Endothelial cell of umbilical vein (primary cell): ENCODE measurements at regions of chr13 and their contacts with region 1.

Region 1: GRCh38 chr13:89514534-89515312 is 1832.8 kb upstream of the MIR17HG start:
- DNase-seq: peak; percentile 97
- H3K4me3 ChIP-seq: no peak overlapping the region
- H3K27ac ChIP-seq: peak overlapping the region; percentile 98
- H3K4me1 ChIP-seq: peaks cover 29% of the 10 kb centered on the region
- H3K27me3 ChIP-seq: no peaks in the 10 kb centered on the region
- CTCF ChIP-seq: no peak
- POLR2A ChIP-seq: peak; percentile 42

Region 2: GRCh38 chr13:89375839-89376238 is 138.9 kb before region 1 on chr13:
- CTCF ChIA-PET with region 1: interaction called, 4 read pairs
- POLR2A ChIA-PET with region 1: no interaction called
- dilution Hi-C with region 1: no loop called
- intact Hi-C with region 1: loop called (anchors 5 kb)
- DNase-seq: peak; percentile 73
- H3K4me3 ChIP-seq: no peak overlapping the region
- H3K27ac ChIP-seq: peak overlapping the region; percentile 1
- H3K4me1 ChIP-seq: peaks cover 2% of the 10 kb centered on the region
- H3K27me3 ChIP-seq: no peaks in the 10 kb centered on the region
- CTCF ChIP-seq: no peak
- POLR2A ChIP-seq: no peak

Region 3: DNA sequence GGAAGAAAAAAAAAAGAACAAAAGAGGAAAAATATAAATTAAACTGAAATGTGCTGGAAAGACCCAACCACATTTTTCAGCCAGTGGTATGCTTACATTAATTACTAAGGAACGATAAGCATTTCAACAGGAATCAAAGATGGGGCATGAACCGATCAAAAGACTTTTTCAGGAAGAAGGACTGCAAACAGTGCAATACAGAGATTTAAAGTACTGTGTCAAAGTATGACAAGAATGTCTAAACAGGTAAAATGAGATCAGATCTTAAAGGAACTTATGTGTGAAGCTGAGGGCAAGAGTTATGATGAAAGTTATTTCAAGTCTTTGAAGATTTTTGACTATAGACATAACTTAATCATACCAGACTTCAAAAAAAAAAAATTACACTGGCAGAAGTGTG is 81.7 kb before region 1 on chr13:
- CTCF ChIA-PET with region 1: interaction called, 5 read pairs
- POLR2A ChIA-PET with region 1: no interaction called
- dilution Hi-C with region 1: no loop called
- intact Hi-C with region 1: loop called (anchors 2 kb)
- DNase-seq: peak; percentile 26
- H3K4me3 ChIP-seq: no peak overlapping the region
- H3K27ac ChIP-seq: no peak overlapping the region
- H3K4me1 ChIP-seq: no peaks in the 10 kb centered on the region
- H3K27me3 ChIP-seq: no peaks in the 10 kb centered on the region
- CTCF ChIP-seq: no peak
- POLR2A ChIP-seq: no peak

Region 4: GRCh38 chr13:89457977-89458376 is 56.7 kb before region 1 on chr13:
- CTCF ChIA-PET with region 1: interaction called, 3 read pairs
- POLR2A ChIA-PET with region 1: no interaction called
- dilution Hi-C with region 1: no loop called
- intact Hi-C with region 1: loop called (anchors 1 kb)
- DNase-seq: peak; percentile 6
- H3K4me3 ChIP-seq: no peak overlapping the region
- H3K27ac ChIP-seq: no peak overlapping the region
- H3K4me1 ChIP-seq: peaks cover 21% of the 10 kb centered on the region
- H3K27me3 ChIP-seq: no peaks in the 10 kb centered on the region
- CTCF ChIP-seq: no peak
- POLR2A ChIP-seq: no peak

Region 5: GRCh38 chr13:89550938-89551337 is 36.2 kb after region 1 on chr13:
- CTCF ChIA-PET with region 1: no interaction called
- POLR2A ChIA-PET with region 1: no interaction called
- dilution Hi-C with region 1: no loop called
- intact Hi-C with region 1: loop called (anchors 1 kb)
- DNase-seq: no peak
- H3K4me3 ChIP-seq: no peak overlapping the region
- H3K27ac ChIP-seq: peak overlapping the region; percentile 83
- H3K4me1 ChIP-seq: peaks cover 17% of the 10 kb centered on the region
- H3K27me3 ChIP-seq: no peaks in the 10 kb centered on the region
- CTCF ChIP-seq: no peak
- POLR2A ChIP-seq: no peak